Activated B cell treated with CpG ODN at 0.5 μM for 24 hours (primary cell): ENCODE measurements at regions of chr18 and their contacts with region 1.

Region 1: DNA sequence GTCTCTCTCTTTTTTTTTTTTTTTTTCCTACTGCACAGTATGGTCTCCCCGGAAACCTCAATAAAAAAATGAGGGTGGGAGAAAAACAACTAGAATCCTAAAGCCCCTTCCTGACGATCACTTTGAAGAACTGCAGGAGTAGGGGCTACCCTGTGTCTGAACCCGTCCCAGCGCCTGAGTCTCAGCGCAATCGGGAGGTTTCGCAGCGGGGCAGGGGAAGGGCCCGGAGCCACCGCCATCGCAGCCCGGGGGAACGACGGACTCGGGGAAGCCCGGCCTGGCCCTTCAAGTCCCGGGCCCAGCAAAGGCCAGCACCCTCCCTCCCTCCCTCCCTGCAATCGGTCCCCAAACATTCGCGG is 411 bp downstream of the NARS1 start:
- DNase-seq: no peak
- ATAC-seq: peak; percentile 9
- H3K4me3 Mint-ChIP-seq: peak overlapping the region; percentile 96
- H3K27ac Mint-ChIP-seq: peak overlapping the region; percentile 98
- H3K4me1 Mint-ChIP-seq: peaks cover 29% of the 10 kb centered on the region
- H3K27me3 Mint-ChIP-seq: no peaks in the 10 kb centered on the region
- CTCF ChIP-seq: no peak

Region 2: DNA sequence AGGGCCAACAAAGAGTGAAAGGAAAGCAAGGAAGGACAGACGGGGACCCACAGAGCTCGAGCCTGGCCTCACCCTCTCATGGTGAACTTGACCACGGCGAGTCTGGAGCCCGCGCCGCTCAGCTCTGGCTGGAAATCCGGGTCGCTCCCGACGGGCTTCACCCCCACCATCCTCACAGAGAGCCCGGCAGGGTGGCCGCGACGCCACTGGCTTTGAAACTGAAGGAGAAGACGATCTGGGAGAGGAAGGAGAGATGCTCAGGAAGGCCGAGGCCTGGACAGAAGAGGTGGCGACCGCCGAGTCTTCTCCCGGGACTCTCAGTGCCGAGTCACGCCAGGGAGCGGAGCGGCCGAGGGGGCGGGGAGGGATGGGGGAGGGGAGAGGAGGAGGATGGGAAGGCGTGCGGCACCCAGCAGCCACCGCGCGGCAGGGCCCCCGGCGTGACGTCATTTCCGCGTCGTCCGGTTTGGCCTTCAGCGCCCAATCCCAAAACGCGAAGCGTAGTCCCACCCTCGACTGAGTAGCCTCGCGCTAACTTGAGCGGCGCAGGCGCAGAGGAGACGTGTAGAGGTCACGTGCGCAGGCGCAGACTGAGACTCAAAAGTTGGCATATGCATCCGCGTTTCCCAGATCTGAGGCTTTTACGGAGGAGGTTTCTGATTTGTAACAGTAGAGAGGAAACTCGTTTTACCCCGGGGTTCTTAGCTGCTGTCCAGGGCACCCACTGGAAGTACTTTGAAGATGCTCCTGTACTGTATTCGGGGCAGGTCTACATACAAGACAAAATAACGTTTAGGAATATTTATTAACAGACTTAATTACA is 982.7 kb before region 1 on chr18 and contains the start of gene TXNL1:
- CTCF ChIA-PET with region 1: no interaction called
- POLR2A ChIA-PET with region 1: no interaction called
- intact Hi-C with region 1: loop called (anchors 1 kb)
- DNase-seq: peak; percentile 95
- ATAC-seq: peak; percentile 96
- H3K4me3 Mint-ChIP-seq: peak within 1 kb of the TSS; percentile 96
- H3K27ac Mint-ChIP-seq: peak within 1 kb of the TSS; percentile 99
- H3K4me1 Mint-ChIP-seq: peaks cover 52% of the 10 kb centered on the region
- H3K27me3 Mint-ChIP-seq: no peaks in the 10 kb centered on the region
- CTCF ChIP-seq: no peak
- total RNA-seq, gene TXNL1: 53.4 and 55.4 TPM in 2 replicates

Region 3: DNA sequence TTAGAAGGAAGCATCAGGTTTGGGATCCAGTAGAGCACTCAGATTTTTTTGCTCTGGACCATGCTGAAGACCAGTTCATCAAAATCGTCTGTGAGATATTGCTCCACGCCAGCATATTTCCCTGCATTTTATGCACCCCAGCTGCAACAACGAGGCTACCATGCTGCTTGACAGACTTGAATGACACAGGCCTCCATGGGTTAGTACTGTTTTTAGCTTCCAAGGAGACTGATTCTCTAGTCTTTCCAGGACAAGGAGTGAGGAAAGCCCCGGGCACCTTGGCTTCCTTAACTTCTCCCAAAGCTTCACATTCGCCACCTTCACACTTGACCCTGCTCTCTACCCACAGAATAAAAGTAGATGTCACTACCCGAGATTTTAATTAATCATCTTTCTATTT is 456.8 kb before region 1 on chr18:
- CTCF ChIA-PET with region 1: no interaction called
- POLR2A ChIA-PET with region 1: no interaction called
- intact Hi-C with region 1: no loop called
- DNase-seq: no peak
- ATAC-seq: no peak
- H3K4me3 Mint-ChIP-seq: no peak overlapping the region
- H3K27ac Mint-ChIP-seq: no peak overlapping the region
- H3K4me1 Mint-ChIP-seq: no peaks in the 10 kb centered on the region
- H3K27me3 Mint-ChIP-seq: peaks cover 18% of the 10 kb centered on the region
- CTCF ChIP-seq: no peak

Region 4: DNA sequence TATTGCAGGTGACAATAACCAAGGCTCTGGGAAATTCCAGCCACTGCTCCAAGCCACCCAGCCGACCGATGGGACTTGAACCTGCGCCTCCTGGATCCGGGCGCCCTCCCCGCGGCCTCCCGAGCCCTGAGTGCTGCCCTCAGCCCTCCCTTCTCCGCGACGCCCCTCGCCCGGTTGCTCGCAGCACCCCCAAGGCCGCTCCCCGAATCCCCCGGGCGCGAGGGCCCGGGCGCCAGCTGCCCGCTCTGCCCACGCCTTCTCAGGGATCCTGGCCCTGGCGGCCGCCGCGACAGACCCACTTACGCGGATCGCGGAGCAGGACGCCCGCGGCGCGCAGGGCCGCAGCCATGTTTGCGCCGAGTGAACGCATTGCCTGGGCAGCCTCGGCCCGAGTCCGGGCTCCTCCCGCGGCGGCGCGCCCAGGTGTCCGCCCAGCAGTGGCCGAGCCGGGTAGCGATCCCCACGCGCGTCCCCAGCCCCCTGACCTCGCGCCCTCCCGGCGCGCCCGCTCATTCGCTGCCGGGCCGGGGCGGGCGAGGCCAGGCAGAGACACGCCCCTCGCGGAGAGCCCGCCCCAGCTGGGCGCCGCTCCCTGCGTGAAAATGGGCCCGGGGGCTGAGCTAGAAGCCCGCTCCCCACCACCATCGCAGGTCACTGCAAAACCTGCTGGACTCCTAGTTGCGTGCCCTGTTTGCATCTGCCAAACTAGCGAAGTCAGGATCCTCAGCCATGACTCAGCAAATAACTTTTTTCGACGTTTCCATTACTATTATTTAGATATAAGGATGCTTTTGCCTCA is 34.8 kb before region 1 on chr18 and contains the start of gene FECH:
- CTCF ChIA-PET with region 1: no interaction called
- POLR2A ChIA-PET with region 1: interaction called, 6 read pairs
- intact Hi-C with region 1: loop called (anchors 1 kb)
- DNase-seq: peak; percentile 70
- ATAC-seq: peak; percentile 96
- H3K4me3 Mint-ChIP-seq: peak within 1 kb of the TSS; percentile 86
- H3K27ac Mint-ChIP-seq: peak within 1 kb of the TSS; percentile 50
- H3K4me1 Mint-ChIP-seq: peaks cover 20% of the 10 kb centered on the region
- H3K27me3 Mint-ChIP-seq: no peaks in the 10 kb centered on the region
- CTCF ChIP-seq: no peak
- total RNA-seq, gene FECH: 9.2 and 9.3 TPM in 2 replicates

Region 5: DNA sequence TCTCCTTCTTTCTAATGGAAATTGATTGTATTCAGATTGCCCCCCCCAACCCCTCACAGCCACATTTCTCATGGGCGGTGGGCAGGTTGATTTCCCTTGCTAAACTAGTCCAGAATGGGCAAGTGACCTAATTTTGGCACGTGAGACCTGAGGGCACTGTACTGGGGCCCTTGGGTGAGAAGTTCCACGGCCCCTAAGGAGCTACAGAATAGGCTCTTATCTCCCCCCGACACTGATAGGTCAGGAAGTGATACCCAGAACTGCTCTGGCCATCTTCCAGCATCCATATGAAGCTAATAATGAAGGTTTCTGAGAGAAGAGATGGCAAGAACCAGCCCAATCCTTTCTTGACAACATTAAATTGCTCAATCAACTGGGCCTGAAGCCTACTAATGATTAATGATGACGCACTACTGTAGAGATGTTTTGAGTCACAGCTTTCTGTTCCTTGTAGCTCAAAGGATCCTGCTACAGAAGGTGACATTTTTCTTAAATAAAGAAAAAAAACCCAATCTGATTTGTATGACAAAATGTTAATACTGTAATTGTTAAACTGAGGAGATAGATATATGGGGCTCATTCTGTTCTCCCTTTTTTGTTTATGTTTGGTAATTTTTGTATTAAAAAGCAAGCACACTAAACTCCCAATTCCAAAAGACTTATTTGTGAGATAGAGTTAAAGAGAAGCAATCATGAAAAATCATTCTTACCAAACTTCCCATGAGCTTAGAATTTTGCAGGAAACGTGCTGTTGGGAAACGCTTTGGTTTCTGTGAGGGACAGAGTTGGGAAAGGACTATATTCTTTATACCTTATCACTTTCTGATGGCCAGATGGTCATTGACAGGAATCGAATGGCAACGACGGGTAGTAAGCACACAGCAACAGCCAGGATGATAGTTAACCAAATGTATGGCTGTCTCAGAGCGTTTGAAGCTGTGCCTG is 28.6 kb after region 1 on chr18:
- CTCF ChIA-PET with region 1: no interaction called
- POLR2A ChIA-PET with region 1: interaction called, 11 read pairs
- intact Hi-C with region 1: no loop called
- DNase-seq: peak; percentile 25
- ATAC-seq: peak; percentile 88
- H3K4me3 Mint-ChIP-seq: peak overlapping the region; percentile 1
- H3K27ac Mint-ChIP-seq: peak overlapping the region; percentile 86
- H3K4me1 Mint-ChIP-seq: peaks cover 48% of the 10 kb centered on the region
- H3K27me3 Mint-ChIP-seq: no peaks in the 10 kb centered on the region
- CTCF ChIP-seq: no peak

Region 6: DNA sequence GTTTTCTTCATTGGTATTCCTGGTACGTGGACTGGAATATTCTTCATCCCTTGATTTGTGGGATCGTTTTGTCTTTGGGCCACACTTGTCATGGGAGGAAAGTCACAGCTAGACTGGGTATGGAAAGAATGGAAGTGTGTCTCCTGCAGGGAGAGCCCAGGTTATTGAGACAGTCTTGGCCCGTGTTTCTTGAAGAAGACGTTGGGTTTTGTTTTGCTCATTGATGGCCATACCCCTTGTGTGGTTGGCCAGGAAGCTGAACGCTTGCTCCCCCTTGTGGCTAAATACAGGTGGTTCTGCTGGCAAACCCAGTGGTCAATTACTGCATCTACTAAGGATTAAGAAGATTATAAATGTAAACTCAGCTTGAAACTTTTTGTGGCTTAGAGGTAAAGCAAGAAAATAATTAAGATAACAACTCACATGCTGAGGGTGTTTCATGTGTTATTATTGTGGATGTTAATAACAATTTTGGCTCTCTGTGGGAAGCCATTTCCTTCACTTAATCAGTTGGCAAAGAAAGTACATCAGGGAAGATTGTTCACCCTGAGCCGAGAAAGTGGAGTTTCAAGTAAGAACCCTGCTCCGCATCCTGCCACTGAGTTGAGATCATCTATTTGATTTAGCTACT is 514.6 kb after region 1 on chr18:
- CTCF ChIA-PET with region 1: no interaction called
- POLR2A ChIA-PET with region 1: interaction called, 3 read pairs
- intact Hi-C with region 1: loop called (anchors 5 kb)
- DNase-seq: peak; percentile 25
- ATAC-seq: peak; percentile 65
- H3K4me3 Mint-ChIP-seq: peak overlapping the region; percentile 52
- H3K27ac Mint-ChIP-seq: peak overlapping the region; percentile 3
- H3K4me1 Mint-ChIP-seq: peaks cover 33% of the 10 kb centered on the region
- H3K27me3 Mint-ChIP-seq: no peaks in the 10 kb centered on the region
- CTCF ChIP-seq: no peak

Region 7: GRCh38 chr18:58276789-58277739 is 655.8 kb after region 1 on chr18:
- CTCF ChIA-PET with region 1: no interaction called
- POLR2A ChIA-PET with region 1: no interaction called
- intact Hi-C with region 1: no loop called
- DNase-seq: no peak
- ATAC-seq: no peak
- H3K4me3 Mint-ChIP-seq: no peak overlapping the region
- H3K27ac Mint-ChIP-seq: no peak overlapping the region
- H3K4me1 Mint-ChIP-seq: peaks cover 7% of the 10 kb centered on the region
- H3K27me3 Mint-ChIP-seq: no peaks in the 10 kb centered on the region
- CTCF ChIP-seq: no peak